ENCODE measurements at regions of chr19 and their contacts with region 1.

Region 1: GRCh38 chr19:34712395-34713261 is 21.4 kb upstream of the ZNF181 start:
- DNase-seq: peak in 1 of 2 donors; percentile 76
- ATAC-seq: peak; percentile 68 to 82 (median 74)
- H3K4me3 ChIP-seq: no peak overlapping the region
- H3K27ac ChIP-seq: no peak overlapping the region
- H3K4me1 ChIP-seq: peaks cover 0 to 6% (median 0%) of the 10 kb centered on the region in 9 donors
- H3K27me3 ChIP-seq: peaks cover 0 to 9% (median 0%) of the 10 kb centered on the region in 7 donors
- CTCF ChIP-seq: peak; percentile 76 to 87 (median 85)

Region 2: GRCh38 chr19:34501339-34502320 is 211.0 kb before region 1 on chr19:
- intact Hi-C with region 1: loop called in 7 of 10 experiments (anchors 2 to 10 kb)
- DNase-seq: peak; percentile 92 to 95
- ATAC-seq: peak; percentile 84 to 95 (median 88)
- H3K4me3 ChIP-seq: no peak overlapping the region
- H3K27ac ChIP-seq: peak overlapping the region in 5 of 10 donors; percentile 3 to 54 (median 26)
- H3K4me1 ChIP-seq: peaks cover 0 to 31% (median 10%) of the 10 kb centered on the region in 9 donors
- H3K27me3 ChIP-seq: peaks cover 0 to 15% (median 0%) of the 10 kb centered on the region in 7 donors
- CTCF ChIP-seq: peak in 8 of 9 donors; percentile 99 to 100 (median 99)

Region 3: GRCh38 chr19:34556488-34556887 is 156.1 kb before region 1 on chr19:
- intact Hi-C with region 1: loop called in 7 of 10 experiments (anchors 5 kb)
- DNase-seq: peak in 1 of 2 donors; percentile 20
- ATAC-seq: peak in 5 of 8 donors; percentile 19 to 89 (median 55)
- H3K4me3 ChIP-seq: no peak overlapping the region
- H3K27ac ChIP-seq: no peak overlapping the region
- H3K4me1 ChIP-seq: no peaks in the 10 kb centered on the region
- H3K27me3 ChIP-seq: peaks cover 0 to 20% (median 12%) of the 10 kb centered on the region in 7 donors
- CTCF ChIP-seq: peak; percentile 15 to 66 (median 54)

Region 4: DNA sequence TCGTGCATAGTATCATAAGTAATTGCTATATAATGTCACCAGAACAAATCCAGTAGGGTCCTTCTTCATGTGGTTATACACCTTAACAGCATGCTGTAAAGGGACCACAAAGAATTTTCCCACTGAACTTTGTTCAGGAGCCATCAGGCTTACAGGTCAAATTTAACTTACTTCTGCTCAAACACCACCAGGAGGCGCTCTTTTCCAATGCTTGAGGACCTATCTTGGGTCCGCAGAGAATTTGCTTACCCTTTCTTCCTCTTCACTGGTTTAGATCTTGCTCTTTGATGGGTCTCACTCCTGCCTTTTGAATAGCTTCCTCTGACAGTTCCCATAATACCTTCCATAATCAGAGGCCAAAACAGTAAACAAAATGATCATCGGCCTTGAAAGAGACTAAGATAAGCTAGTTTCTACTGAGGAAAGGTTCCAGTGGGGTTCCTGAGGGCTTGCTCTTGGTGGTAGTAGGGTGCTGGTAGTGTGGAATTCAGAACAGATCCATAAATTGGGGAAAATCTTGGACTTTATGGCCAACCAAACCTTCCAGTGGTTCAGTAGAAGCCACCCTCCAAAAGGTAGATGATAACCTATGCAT is 73.0 kb before region 1 on chr19:
- intact Hi-C with region 1: loop called (anchors 1 to 5 kb)
- DNase-seq: peak in 1 of 2 donors; percentile 61
- ATAC-seq: peak in 5 of 8 donors; percentile 49 to 67 (median 57)
- H3K4me3 ChIP-seq: no peak overlapping the region
- H3K27ac ChIP-seq: no peak overlapping the region
- H3K4me1 ChIP-seq: no peaks in the 10 kb centered on the region
- H3K27me3 ChIP-seq: no peaks in the 10 kb centered on the region
- CTCF ChIP-seq: peak; percentile 68 to 90 (median 85)

Region 5: GRCh38 chr19:35177377-35178274 is 465.0 kb after region 1 on chr19:
- intact Hi-C with region 1: no loop called
- DNase-seq: no peak
- ATAC-seq: no peak
- H3K4me3 ChIP-seq: no peak overlapping the region
- H3K27ac ChIP-seq: no peak overlapping the region
- H3K4me1 ChIP-seq: peaks cover 0 to under 1% (median 0%) of the 10 kb centered on the region in 9 donors
- H3K27me3 ChIP-seq: peaks cover 0 to 13% (median 0%) of the 10 kb centered on the region in 7 donors
- CTCF ChIP-seq: no peak

Measured in heart right ventricle (tissue), 16 donors.